ENCODE measurements at regions of chr7 and their contacts with region 1.

Region 1: DNA sequence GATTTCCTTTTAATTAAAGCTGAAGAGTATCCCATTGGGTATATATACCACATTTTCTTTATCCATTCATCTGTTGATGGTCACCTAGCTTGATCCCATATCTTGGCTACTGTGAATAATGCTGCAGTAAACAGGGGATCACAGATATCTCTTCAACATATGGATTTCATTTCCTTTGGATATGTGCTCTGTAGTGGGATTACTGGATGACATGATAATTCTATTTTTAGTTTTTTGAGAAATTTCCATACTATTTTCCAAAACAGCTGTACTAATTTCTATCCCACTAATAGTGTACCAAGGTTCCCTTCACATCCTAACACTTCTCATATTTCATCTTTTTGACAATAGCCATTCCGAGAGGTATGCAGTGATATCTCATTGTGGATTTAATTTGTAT is 48.8 kb upstream of the PRPS1L1 start:
- DNase-seq: no peak
- ATAC-seq: no peak
- H3K4me3 ChIP-seq: no peak overlapping the region
- H3K4me3 Mint-ChIP-seq: no peak overlapping the region
- H3K27ac ChIP-seq: no peak overlapping the region
- H3K27ac Mint-ChIP-seq: no peak overlapping the region
- H3K4me1 ChIP-seq: no peaks in the 10 kb centered on the region
- H3K4me1 Mint-ChIP-seq: no peaks in the 10 kb centered on the region
- H3K27me3 ChIP-seq: no peaks in the 10 kb centered on the region
- H3K27me3 Mint-ChIP-seq: peaks cover 5 to 8% of the 10 kb centered on the region in 2 donors

Region 2: GRCh38 chr7:18109762-18110161 is 33.3 kb after region 1 on chr7:
- CTCF ChIA-PET with region 1: no interaction called
- POLR2A ChIA-PET with region 1: interaction called in 1 of 2 experiments, 10 read pairs
- DNase-seq: no peak
- ATAC-seq: no peak
- H3K4me3 ChIP-seq: no peak overlapping the region
- H3K4me3 Mint-ChIP-seq: no peak overlapping the region
- H3K27ac ChIP-seq: no peak overlapping the region
- H3K27ac Mint-ChIP-seq: no peak overlapping the region
- H3K4me1 ChIP-seq: no peaks in the 10 kb centered on the region
- H3K4me1 Mint-ChIP-seq: no peaks in the 10 kb centered on the region
- H3K27me3 ChIP-seq: no peaks in the 10 kb centered on the region
- H3K27me3 Mint-ChIP-seq: peaks cover 7 to 10% of the 10 kb centered on the region in 2 donors

Region 3: DNA sequence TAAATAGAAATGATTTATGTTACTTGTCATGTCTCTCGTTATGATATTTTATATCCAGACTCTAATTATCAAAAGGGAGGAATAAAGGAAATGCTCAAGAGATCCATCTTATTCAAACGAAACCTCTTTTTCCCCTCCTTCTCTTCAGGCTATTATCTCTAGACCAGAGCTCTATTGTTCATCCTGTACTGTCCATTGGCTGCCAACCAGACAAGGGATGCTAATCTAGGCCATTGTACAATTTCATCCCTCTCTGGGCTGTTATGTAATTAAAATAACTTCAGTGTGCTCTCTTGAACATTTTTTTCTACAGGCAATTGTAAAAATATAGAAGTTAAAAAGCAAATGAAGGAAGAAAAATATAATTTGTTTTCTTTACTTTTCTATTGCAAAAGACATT is 639.5 kb after region 1 on chr7:
- CTCF ChIA-PET with region 1: no interaction called
- POLR2A ChIA-PET with region 1: no interaction called
- DNase-seq: no peak
- ATAC-seq: no peak
- H3K4me3 ChIP-seq: no peak overlapping the region
- H3K4me3 Mint-ChIP-seq: no peak overlapping the region
- H3K27ac ChIP-seq: no peak overlapping the region
- H3K27ac Mint-ChIP-seq: no peak overlapping the region
- H3K4me1 ChIP-seq: no peaks in the 10 kb centered on the region
- H3K4me1 Mint-ChIP-seq: no peaks in the 10 kb centered on the region
- H3K27me3 ChIP-seq: no peaks in the 10 kb centered on the region
- H3K27me3 Mint-ChIP-seq: no peaks in the 10 kb centered on the region

Measured in T-cell (primary cell).